HEK293 (cell line): ENCODE measurements at regions of chr19 and their contacts with region 1.

Region 1: DNA sequence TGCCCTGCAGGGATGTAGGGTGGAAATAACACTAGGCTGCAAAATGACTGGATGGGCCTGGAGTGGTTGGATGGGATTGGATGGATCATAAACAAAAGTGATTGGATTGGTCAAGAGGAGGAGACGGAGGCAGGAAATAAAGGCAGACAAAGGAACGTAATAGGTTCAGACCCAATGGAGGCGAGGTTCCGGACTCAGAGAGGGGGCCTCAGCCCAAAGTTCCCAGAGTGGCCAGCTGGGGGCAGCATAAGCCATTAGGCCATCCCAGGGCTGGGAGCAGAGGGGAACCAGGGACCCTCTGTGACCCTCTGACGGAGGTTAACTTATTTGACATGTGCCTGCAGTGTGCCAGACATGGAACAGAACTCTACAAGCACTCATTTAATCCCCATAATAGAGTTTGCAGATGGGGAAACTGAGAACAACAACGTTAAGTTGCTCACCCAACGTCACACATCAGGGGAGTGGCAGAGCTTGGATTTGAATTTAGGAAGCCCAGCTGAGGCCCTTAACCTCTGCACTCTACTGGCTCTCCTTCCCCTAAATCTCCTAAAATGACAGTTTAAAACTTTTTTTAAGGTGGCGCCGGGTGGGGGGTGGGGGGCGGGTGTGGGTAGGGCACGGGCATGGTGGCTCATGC is 15.3 kb upstream of the MAP1S start:
- H3K4me3 ChIP-seq: no peak overlapping the region
- H3K27ac ChIP-seq: no peak overlapping the region
- H3K4me1 ChIP-seq: no peaks in the 10 kb centered on the region
- CTCF ChIP-seq: peak; percentile 27; the same call in 1 of the 2 replicates

Region 2: GRCh38 chr19:17718947-17719711 is 15.2 kb after region 1 on chr19 and contains the start of gene MAP1S:
- CTCF ChIA-PET with region 1: interaction called, 13 read pairs
- POLR2A ChIA-PET with region 1: interaction called, 5 read pairs
- H3K4me3 ChIP-seq: peak within 1 kb of the TSS; percentile 93
- H3K27ac ChIP-seq: peak within 1 kb of the TSS; percentile 50; the same call in 1 of the 2 replicates
- H3K4me1 ChIP-seq: peaks cover 6% of the 10 kb centered on the region
- CTCF ChIP-seq: no peak

Region 3: GRCh38 chr19:17733127-17733526 is 29.2 kb after region 1 on chr19:
- CTCF ChIA-PET with region 1: no interaction called
- POLR2A ChIA-PET with region 1: no interaction called
- H3K4me3 ChIP-seq: no peak overlapping the region
- H3K27ac ChIP-seq: no peak overlapping the region
- H3K4me1 ChIP-seq: no peaks in the 10 kb centered on the region
- CTCF ChIP-seq: no peak

Region 4: DNA sequence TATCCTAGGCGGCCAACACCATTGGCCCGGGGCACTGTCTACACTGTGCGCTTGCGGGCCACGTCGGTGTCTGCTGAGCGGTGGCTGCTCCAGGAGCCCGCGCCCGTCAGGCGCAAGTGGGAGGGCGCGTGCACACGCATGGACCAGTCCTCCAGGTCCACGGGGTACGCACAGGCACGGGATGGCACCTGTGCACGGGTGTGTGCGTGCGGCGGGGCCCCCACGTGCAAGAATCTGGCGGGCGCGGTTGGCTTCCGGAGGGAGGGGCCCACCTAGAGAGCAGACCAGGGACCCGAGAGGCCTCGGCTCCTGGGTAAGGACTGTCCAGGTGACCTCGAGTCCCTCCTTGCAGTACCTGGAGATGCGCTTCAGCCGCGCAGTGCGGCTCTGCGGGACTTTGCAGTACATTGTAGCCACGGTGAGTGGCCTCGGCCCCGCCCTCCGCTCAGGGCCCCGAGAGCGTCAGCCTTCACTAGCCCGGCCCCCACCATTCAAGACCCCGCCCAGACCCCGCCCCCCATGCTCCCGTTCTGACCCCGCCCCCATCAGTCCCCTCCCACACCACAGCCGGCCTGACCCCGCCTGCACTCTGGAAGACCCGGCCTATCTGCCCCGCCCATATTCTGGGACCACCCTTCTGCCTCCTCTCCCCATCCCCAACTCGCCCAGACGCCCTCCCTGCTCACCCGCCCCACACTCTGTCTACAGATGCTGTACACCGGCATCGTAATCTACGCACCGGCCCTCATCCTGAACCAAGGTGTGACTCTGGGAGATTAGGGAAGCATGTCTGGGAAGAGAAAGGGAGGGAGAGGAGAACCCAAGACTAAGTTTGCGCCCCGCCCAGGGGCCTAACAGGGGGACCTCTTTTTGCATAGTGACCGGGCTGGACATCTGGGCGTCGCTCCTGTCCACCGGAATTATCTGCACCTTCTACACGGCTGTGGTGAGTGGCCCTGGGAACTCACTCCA is 170.1 kb after region 1 on chr19:
- CTCF ChIA-PET with region 1: no interaction called
- POLR2A ChIA-PET with region 1: no interaction called
- H3K4me3 ChIP-seq: peak overlapping the region; percentile 31
- H3K27ac ChIP-seq: no peak overlapping the region
- H3K4me1 ChIP-seq: peaks cover 3% of the 10 kb centered on the region; the same call in 1 of the 2 replicates
- CTCF ChIP-seq: no peak